SK-N-SH (cell line): ENCODE measurements at regions of chr12 and their contacts with region 1.

Region 1: DNA sequence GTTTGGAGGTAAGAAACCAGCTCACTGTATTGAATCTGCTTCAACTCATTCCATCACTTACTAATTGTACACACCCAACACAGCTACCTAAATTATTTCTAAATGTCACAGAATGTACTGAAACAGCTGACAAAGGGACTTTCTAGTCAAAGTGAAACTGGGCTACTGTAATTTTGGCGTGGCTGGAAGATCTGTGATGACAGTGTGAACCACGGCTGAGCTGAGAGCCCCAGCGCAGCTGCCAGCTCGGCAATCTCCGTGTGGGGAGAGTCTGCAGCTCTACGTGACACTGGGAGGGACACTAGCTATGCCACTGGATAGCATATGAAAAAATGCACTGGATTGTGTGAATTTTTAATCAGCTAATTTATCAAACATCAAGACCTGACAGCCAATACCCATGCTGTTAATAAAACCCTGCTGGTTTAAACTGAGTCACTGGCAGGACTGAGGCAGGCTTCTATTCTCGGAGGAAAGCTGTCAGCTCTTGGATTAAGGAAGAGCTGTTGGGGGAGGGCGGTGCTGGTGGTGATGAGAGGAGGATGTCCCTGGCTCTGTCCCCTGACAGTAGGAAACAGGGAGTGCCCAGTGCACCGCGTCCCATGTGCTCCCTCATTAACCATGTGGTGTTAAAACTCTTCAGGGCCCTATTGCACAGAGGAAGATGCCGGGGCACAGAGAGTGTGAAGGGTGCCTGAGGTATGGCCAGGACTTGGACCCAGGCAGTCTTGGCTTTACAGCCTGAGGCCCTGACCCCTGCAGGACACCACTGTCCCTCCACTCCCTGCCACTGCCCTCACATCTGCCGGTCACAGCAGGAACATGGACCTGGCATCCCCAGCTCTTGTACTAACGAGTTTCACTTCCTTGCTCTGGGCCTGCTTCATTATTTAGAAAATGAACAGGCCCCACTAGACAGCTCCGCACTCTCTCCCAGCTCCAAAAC is 13.3 kb downstream of the SLC15A4 start:
- DNase-seq: peak; percentile 42
- H3K4me3 ChIP-seq: no peak overlapping the region
- H3K27ac ChIP-seq: no peak overlapping the region; a peak in 1 of 4 replicates
- H3K4me1 ChIP-seq: peaks cover 0 to 10% of the 10 kb centered on the region in 2 experiments; a peak in 1 of 4 replicates
- H3K27me3 ChIP-seq: no peaks in the 10 kb centered on the region
- CTCF ChIP-seq: no peak
- EP300 ChIP-seq: no peak
- RAD21 ChIP-seq: no peak

Region 2: DNA sequence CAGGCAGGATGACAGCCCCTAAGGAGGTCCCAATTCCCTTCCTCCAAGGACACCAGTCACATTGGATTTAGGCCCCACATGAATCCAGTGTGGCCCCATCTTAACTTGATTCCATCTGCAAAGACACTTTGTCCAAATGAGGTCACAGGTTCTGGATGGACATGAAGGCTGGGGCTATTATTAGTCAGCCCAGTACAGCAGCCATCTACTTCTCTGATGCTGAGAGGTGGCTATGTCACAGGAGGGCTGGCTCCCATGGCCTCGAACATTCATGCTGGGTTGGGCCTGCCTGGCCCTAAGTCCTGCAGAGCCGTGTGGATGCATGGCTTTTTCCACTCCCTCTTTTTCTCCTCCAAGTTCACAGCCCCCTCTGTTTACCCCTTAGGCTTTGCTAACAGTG is 22.6 kb before region 1 on chr12:
- CTCF ChIA-PET with region 1: no interaction called
- POLR2A ChIA-PET with region 1: no interaction called
- DNase-seq: no peak
- H3K4me3 ChIP-seq: no peak overlapping the region
- H3K27ac ChIP-seq: no peak overlapping the region
- H3K4me1 ChIP-seq: no peaks in the 10 kb centered on the region; a peak in 1 of 4 replicates
- H3K27me3 ChIP-seq: no peaks in the 10 kb centered on the region
- CTCF ChIP-seq: no peak
- EP300 ChIP-seq: no peak
- RAD21 ChIP-seq: no peak

Region 3: GRCh38 chr12:128823916-128824839 is 13.7 kb after region 1 on chr12 and contains the start of gene SLC15A4:
- CTCF ChIA-PET with region 1: interaction called, 8 read pairs
- POLR2A ChIA-PET with region 1: interaction called, 13 read pairs
- DNase-seq: peak; percentile 99
- H3K4me3 ChIP-seq: peak within 1 kb of the TSS; percentile 87 to 98
- H3K27ac ChIP-seq: peak within 1 kb of the TSS; percentile 71 to 78
- H3K4me1 ChIP-seq: peaks cover 3 to 15% of the 10 kb centered on the region in 2 experiments; a peak in 2 of 4 replicates
- H3K27me3 ChIP-seq: no peaks in the 10 kb centered on the region
- CTCF ChIP-seq: peak; percentile 30
- EP300 ChIP-seq: no peak
- RAD21 ChIP-seq: no peak
- polyA plus RNA-seq, gene SLC15A4: 14.5 and 20.5 TPM in 2 replicates